Activated naive CD4-positive, alpha-beta T cell treated with anti-CD3 and anti-CD28 coated beads for 36 hours (primary cell): ENCODE measurements at regions of chr6 and their contacts with region 1.

Region 1: DNA sequence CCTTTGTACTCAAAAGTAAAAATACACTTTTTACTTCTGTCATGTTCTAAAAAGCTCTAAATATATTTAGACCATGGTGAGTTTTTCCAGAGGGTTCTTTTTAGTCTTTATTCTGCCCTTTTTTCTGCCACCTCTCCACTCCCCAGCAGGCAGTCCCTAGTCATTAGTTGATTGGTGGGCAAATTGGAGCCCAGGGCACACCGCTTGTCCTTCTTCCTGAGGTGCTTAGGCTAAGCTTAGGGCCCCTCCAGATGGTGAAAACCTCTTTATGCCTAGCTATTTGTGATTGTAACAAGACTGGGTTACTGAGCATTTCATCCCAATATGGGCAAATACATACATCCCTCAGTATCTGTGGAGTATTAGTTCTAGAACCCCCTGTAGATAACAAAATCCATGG is 6.2 kb downstream of the TREML1 start:
- DNase-seq: no peak
- H3K4me3 Mint-ChIP-seq: no peak overlapping the region
- H3K27ac Mint-ChIP-seq: no peak overlapping the region
- H3K4me1 Mint-ChIP-seq: peaks cover 10% of the 10 kb centered on the region
- H3K27me3 Mint-ChIP-seq: no peaks in the 10 kb centered on the region

Region 2: GRCh38 chr6:41100871-41101287 is 47.0 kb before region 1 on chr6:
- CTCF ChIA-PET with region 1: no interaction called
- intact Hi-C with region 1: loop called (anchors 5 kb)
- DNase-seq: no peak
- H3K4me3 Mint-ChIP-seq: no peak overlapping the region
- H3K27ac Mint-ChIP-seq: no peak overlapping the region
- H3K4me1 Mint-ChIP-seq: peaks cover 2% of the 10 kb centered on the region
- H3K27me3 Mint-ChIP-seq: no peaks in the 10 kb centered on the region

Region 3: DNA sequence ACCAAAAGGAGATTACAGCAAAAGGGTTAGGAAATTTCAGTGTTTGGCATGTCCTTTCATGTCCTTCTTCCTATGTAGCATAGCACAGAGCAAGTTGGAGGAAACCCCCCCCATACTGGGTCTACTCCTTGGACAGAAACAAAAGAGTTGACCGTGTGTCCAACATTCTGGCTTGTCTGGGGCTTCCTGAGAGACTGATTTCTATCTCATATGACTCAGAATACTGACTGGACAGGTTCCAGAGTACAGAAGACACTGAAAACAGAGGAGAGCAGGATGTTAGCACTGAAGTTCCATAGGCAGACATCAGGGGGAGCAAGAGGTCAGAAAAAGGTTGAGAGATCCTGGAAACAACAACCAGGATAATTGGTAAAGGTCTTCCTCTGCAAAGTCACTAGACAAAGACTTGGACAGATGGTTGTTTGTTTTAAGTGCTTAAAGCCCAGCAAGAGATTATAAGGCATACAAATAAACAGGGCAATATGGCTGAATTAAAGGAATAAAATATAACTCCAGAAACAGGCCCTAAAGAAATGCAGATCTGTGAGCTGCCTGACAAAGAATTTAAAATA is 698.8 kb after region 1 on chr6:
- CTCF ChIA-PET with region 1: no interaction called
- intact Hi-C with region 1: no loop called
- DNase-seq: peak; percentile 81
- H3K4me3 Mint-ChIP-seq: no peak overlapping the region
- H3K27ac Mint-ChIP-seq: no peak overlapping the region
- H3K4me1 Mint-ChIP-seq: peaks cover 5% of the 10 kb centered on the region
- H3K27me3 Mint-ChIP-seq: no peaks in the 10 kb centered on the region